ENCODE measurements at regions of chr9 and their contacts with region 1.

Region 1: GRCh38 chr9:136363606-136364370 is at the start of gene DNLZ:
- DNase-seq: peak; percentile 71 to 93 (median 90)
- ATAC-seq: peak; percentile 88
- H3K4me3 ChIP-seq: peak within 1 kb of the TSS; percentile 70
- H3K4me3 Mint-ChIP-seq: peak within 1 kb of the TSS; percentile 65 to 88 (median 84)
- H3K27ac ChIP-seq: peak within 1 kb of the TSS; percentile 75
- H3K27ac Mint-ChIP-seq: peak within 1 kb of the TSS; percentile 62 to 91 (median 75)
- H3K4me1 ChIP-seq: peaks cover 0 to 5% of the 10 kb centered on the region in 2 donors
- H3K4me1 Mint-ChIP-seq: peaks cover 0 to 6% (median 0%) of the 10 kb centered on the region in 7 donors
- H3K27me3 ChIP-seq: no peaks in the 10 kb centered on the region
- H3K27me3 Mint-ChIP-seq: no peaks in the 10 kb centered on the region
- total RNA-seq, gene DNLZ: 17.2 to 27.5 (median 24.8) TPM

Region 2: DNA sequence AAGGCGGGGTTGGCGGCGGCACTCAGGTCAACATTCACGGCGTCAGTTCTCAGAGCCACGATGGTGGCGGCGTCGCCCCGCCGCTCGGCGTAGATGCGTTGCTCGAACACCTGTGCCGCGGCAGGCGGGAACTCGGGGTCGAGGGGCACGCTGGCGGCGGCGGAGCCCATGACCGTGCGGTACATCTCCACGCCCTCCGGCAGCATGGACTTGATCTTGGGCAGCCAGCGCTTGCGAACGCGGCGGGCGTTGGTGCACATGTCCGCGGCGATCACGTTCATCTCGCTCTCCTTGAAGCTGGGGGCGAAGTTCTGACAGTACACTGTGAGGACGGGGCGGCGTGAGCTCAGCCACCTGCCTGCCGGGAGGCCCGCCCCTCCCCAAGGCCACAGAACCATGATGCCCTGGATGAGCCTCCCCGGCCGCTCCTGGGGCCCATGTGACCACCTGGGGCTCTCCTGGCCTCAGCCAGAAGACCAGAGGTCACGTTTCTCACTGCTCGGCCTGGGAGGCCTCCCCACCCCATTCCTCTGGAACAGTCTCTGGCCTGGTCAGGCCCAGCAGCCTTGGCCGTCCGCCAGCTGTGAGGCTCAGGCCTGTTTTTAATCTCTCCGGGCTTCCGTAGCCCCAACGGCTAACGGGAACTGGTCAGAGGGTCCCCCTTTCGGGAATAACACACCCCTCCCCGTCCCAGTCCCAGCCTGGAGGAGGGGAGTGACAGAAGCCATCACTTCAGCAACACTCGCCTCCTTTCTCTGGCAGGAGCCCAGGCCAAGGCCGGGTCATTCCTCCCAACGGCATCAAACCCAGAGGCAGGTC is 351.9 kb before region 1 on chr9:
- CTCF ChIA-PET with region 1: no interaction called
- POLR2A ChIA-PET with region 1: no interaction called
- intact Hi-C with region 1: no loop called
- DNase-seq: no peak
- ATAC-seq: no peak
- H3K4me3 ChIP-seq: no peak overlapping the region
- H3K4me3 Mint-ChIP-seq: no peak overlapping the region
- H3K27ac ChIP-seq: no peak overlapping the region
- H3K27ac Mint-ChIP-seq: no peak overlapping the region
- H3K4me1 ChIP-seq: no peaks in the 10 kb centered on the region
- H3K4me1 Mint-ChIP-seq: peaks cover 0 to 6% (median 0%) of the 10 kb centered on the region in 7 donors
- H3K27me3 ChIP-seq: no peaks in the 10 kb centered on the region
- H3K27me3 Mint-ChIP-seq: no peaks in the 10 kb centered on the region

Region 3: GRCh38 chr9:136109351-136110081 is 254.3 kb before region 1 on chr9:
- CTCF ChIA-PET with region 1: no interaction called
- POLR2A ChIA-PET with region 1: interaction called, 3 read pairs
- intact Hi-C with region 1: loop called in 1 of 2 experiments (anchors 2 kb)
- DNase-seq: peak; percentile 80 to 93 (median 89)
- ATAC-seq: peak; percentile 96
- H3K4me3 ChIP-seq: peak overlapping the region; percentile 69
- H3K4me3 Mint-ChIP-seq: peak overlapping the region; percentile 78 to 91 (median 88)
- H3K27ac ChIP-seq: peak overlapping the region; percentile 82
- H3K27ac Mint-ChIP-seq: peak overlapping the region; percentile 64 to 93 (median 91)
- H3K4me1 ChIP-seq: peaks cover 60 to 75% of the 10 kb centered on the region in 2 donors
- H3K4me1 Mint-ChIP-seq: peaks cover 42 to 82% (median 64%) of the 10 kb centered on the region in 7 donors
- H3K27me3 ChIP-seq: no peaks in the 10 kb centered on the region
- H3K27me3 Mint-ChIP-seq: no peaks in the 10 kb centered on the region

Region 4: DNA sequence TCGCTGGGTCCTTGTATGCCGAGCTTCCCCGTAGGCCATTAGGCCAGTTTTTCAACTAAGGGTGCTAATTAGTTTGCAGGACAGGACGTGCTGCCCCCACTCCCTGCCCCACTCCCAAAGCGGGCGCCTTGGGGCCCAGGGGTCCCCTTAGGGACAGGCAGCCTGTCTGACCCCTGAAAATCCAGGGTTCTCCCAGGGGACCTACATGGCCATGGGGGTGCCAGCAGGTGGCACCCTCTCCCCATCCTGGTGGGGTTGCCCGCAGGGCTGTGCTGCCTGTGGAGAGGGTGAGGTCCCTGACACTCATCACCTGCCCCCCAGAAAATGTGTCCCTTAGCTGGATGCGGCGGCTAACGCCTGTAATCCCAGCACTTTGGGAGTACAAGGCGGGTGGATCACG is 51.4 kb before region 1 on chr9:
- CTCF ChIA-PET with region 1: interaction called, 4 read pairs
- POLR2A ChIA-PET with region 1: no interaction called
- intact Hi-C with region 1: loop called (anchors 1 kb)
- DNase-seq: peak in 7 of 9 donors; percentile 29 to 54 (median 37)
- ATAC-seq: peak; percentile 51
- H3K4me3 ChIP-seq: no peak overlapping the region
- H3K4me3 Mint-ChIP-seq: no peak overlapping the region
- H3K27ac ChIP-seq: no peak overlapping the region
- H3K27ac Mint-ChIP-seq: no peak overlapping the region
- H3K4me1 ChIP-seq: peaks cover 0 to 8% of the 10 kb centered on the region in 2 donors
- H3K4me1 Mint-ChIP-seq: no peaks in the 10 kb centered on the region
- H3K27me3 ChIP-seq: no peaks in the 10 kb centered on the region
- H3K27me3 Mint-ChIP-seq: no peaks in the 10 kb centered on the region

Region 5: GRCh38 chr9:136385015-136385414 is 21.2 kb after region 1 on chr9:
- CTCF ChIA-PET with region 1: no interaction called
- POLR2A ChIA-PET with region 1: no interaction called
- intact Hi-C with region 1: loop called in 1 of 2 experiments (anchors 1 kb)
- DNase-seq: peak in 6 of 9 donors; percentile 16 to 57 (median 40)
- ATAC-seq: peak; percentile 51
- H3K4me3 ChIP-seq: no peak overlapping the region
- H3K4me3 Mint-ChIP-seq: peak overlapping the region in 6 of 10 donors; percentile 8 to 63 (median 20)
- H3K27ac ChIP-seq: no peak overlapping the region
- H3K27ac Mint-ChIP-seq: peak overlapping the region in 4 of 9 donors; percentile 6 to 64 (median 24)
- H3K4me1 ChIP-seq: peaks cover 8 to 20% of the 10 kb centered on the region in 2 donors
- H3K4me1 Mint-ChIP-seq: peaks cover 8 to 22% (median 16%) of the 10 kb centered on the region in 7 donors
- H3K27me3 ChIP-seq: no peaks in the 10 kb centered on the region
- H3K27me3 Mint-ChIP-seq: no peaks in the 10 kb centered on the region

Region 6: GRCh38 chr9:136439550-136440408 is 76.0 kb after region 1 on chr9 and contains the start of gene INPP5E:
- CTCF ChIA-PET with region 1: no interaction called
- POLR2A ChIA-PET with region 1: no interaction called
- intact Hi-C with region 1: loop called in 1 of 2 experiments (anchors 1 kb)
- DNase-seq: peak; percentile 68 to 99 (median 84)
- ATAC-seq: peak; percentile 93
- H3K4me3 ChIP-seq: peak within 1 kb of the TSS; percentile 64
- H3K4me3 Mint-ChIP-seq: peak within 1 kb of the TSS; percentile 79 to 90 (median 85)
- H3K27ac ChIP-seq: peak within 1 kb of the TSS; percentile 84
- H3K27ac Mint-ChIP-seq: peak within 1 kb of the TSS in 8 of 9 donors; percentile 30 to 85 (median 70)
- H3K4me1 ChIP-seq: peaks cover 21% of the 10 kb centered on the region in 2 donors
- H3K4me1 Mint-ChIP-seq: peaks cover 20 to 29% (median 26%) of the 10 kb centered on the region in 7 donors
- H3K27me3 ChIP-seq: no peaks in the 10 kb centered on the region
- H3K27me3 Mint-ChIP-seq: no peaks in the 10 kb centered on the region
- total RNA-seq, gene INPP5E: 15.7 to 23.8 (median 22.6) TPM

Region 7: GRCh38 chr9:136799854-136800657 is 436.3 kb after region 1 on chr9:
- CTCF ChIA-PET with region 1: no interaction called
- POLR2A ChIA-PET with region 1: no interaction called
- intact Hi-C with region 1: loop called in 1 of 2 experiments (anchors 1 kb)
- DNase-seq: peak; percentile 58 to 89 (median 79)
- ATAC-seq: peak; percentile 90
- H3K4me3 ChIP-seq: peak overlapping the region; percentile 63
- H3K4me3 Mint-ChIP-seq: peak overlapping the region; percentile 82 to 92 (median 86)
- H3K27ac ChIP-seq: peak overlapping the region; percentile 59
- H3K27ac Mint-ChIP-seq: peak overlapping the region in 4 of 9 donors; percentile 25 to 81 (median 78)
- H3K4me1 ChIP-seq: peaks cover 10 to 24% of the 10 kb centered on the region in 2 donors
- H3K4me1 Mint-ChIP-seq: peaks cover 6 to 42% (median 35%) of the 10 kb centered on the region in 7 donors
- H3K27me3 ChIP-seq: no peaks in the 10 kb centered on the region
- H3K27me3 Mint-ChIP-seq: peaks cover 0 to 45% (median 0%) of the 10 kb centered on the region in 5 donors

Region 8: DNA sequence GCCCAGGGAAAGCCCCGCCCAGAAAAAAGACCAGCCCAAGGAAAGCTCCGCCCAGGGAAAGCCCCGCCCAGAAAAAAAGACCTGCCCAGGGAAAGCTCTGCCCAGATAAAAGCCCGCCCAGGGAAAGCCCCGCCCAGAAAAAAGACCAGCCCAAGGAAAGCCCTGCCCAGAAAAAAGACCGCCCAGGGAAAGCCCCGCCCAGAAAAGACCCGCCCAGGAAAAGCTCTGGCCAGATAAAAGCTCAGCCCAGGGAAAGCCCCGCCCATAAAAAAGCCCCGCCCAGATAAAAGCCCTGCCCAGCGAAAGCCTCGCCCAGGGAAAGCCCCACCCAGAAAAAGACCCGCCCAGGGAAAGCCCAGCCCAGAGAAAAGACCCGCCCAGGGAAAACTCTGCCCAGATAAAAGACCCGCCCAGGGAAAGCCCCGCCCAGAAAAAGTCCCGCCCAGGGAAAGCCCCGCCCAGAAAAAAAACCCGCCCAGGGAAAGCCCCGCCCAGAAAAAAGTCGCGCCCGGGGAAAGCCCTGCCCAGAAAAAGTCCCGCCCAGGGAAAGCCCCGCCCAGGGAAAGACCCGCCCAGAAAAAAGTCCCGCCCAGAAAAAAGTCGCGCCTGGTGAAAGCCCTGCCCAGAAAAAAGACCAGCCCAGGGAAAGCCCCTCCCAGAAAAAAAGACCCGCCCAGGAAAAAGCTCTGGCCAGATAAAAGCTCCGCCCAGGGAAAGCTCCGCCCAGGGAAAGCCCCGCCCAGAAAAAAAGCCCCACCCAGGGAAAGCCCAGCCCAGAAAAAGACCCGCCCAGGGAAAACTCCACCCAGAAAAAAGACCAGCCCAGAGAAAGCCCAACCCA is 787.0 kb after region 1 on chr9:
- CTCF ChIA-PET with region 1: no interaction called
- POLR2A ChIA-PET with region 1: no interaction called
- intact Hi-C with region 1: no loop called
- DNase-seq: peak in 1 of 9 donors; percentile 68
- ATAC-seq: no peak
- H3K4me3 ChIP-seq: no peak overlapping the region
- H3K4me3 Mint-ChIP-seq: no peak overlapping the region
- H3K27ac ChIP-seq: no peak overlapping the region
- H3K27ac Mint-ChIP-seq: peak overlapping the region in 1 of 9 donors; percentile 65
- H3K4me1 ChIP-seq: no peaks in the 10 kb centered on the region
- H3K4me1 Mint-ChIP-seq: peaks cover 0 to 10% (median 0%) of the 10 kb centered on the region in 7 donors
- H3K27me3 ChIP-seq: peaks cover 0 to 4% of the 10 kb centered on the region in 2 donors
- H3K27me3 Mint-ChIP-seq: peaks cover 7 to 16% (median 12%) of the 10 kb centered on the region in 5 donors